ENCODE measurements at regions of chr3 and their contacts with region 1.

Region 1: GRCh38 chr3:121800906-121801305 is 34.0 kb downstream of the IQCB1 start:
- DNase-seq: no peak
- ATAC-seq: no peak
- H3K4me3 ChIP-seq: no peak overlapping the region
- H3K27ac ChIP-seq: no peak overlapping the region
- H3K4me1 ChIP-seq: peaks cover 0 to 4% (median 0%) of the 10 kb centered on the region in 12 donors
- H3K27me3 ChIP-seq: no peaks in the 10 kb centered on the region
- CTCF ChIP-seq: no peak
- POLR2A ChIP-seq: no peak

Region 2: DNA sequence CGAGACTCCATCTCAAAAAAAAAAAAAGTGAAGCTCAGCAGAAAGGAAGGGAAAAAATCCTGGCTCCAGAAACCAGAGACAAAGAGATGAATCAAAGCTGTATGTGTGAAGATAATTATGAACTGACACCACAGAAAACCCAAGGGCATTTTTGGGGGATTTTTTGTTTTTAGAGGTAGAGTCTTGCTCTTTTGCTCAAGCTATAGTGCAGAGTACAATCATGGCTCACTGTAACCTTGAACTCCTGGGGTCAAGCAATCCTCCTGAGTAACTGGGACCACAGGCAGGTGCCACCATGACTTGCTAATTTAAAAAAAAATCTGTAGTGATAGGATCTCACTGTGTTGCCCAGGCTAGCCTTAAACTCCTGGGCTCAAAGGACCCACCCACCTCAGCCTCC is 163.0 kb before region 1 on chr3:
- intact Hi-C with region 1: no loop called
- DNase-seq: no peak
- ATAC-seq: no peak
- H3K4me3 ChIP-seq: no peak overlapping the region
- H3K27ac ChIP-seq: no peak overlapping the region
- H3K4me1 ChIP-seq: no peaks in the 10 kb centered on the region
- H3K27me3 ChIP-seq: no peaks in the 10 kb centered on the region
- CTCF ChIP-seq: no peak
- POLR2A ChIP-seq: no peak

Region 3: DNA sequence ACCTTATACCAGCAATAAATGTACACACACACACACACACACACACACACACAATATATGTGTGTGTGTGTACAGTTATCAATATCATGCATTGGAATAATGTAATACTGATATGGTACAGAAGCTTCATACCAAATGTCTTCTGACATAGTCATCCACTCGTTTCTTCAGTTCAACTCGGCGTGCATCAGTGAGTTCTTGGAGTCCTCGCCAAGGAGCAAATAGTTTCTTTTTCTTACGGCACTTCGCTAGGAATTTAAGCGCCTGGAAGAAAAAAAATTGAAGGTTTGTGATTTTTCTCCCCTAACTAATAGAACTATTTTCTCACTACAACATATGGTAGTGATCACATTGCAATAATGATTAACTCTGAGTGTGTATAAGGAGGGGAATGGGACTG is 19.3 kb before region 1 on chr3:
- intact Hi-C with region 1: loop called in 1 of 10 experiments (anchors 1 kb)
- DNase-seq: no peak
- ATAC-seq: no peak
- H3K4me3 ChIP-seq: no peak overlapping the region
- H3K27ac ChIP-seq: no peak overlapping the region
- H3K4me1 ChIP-seq: peaks cover 0 to 7% (median 0%) of the 10 kb centered on the region in 12 donors
- H3K27me3 ChIP-seq: no peaks in the 10 kb centered on the region
- CTCF ChIP-seq: no peak
- POLR2A ChIP-seq: no peak